Mammary epithelial cell (primary cell): ENCODE measurements at regions of chr19 and their contacts with region 1.

Region 1: GRCh38 chr19:3687774-3688706 is 12.2 kb downstream of the PIP5K1C start:
- DNase-seq: peak; percentile 43
- H3K4me3 ChIP-seq: peak overlapping the region in 2 of 3 experiments; percentile 1 to 5
- H3K27ac ChIP-seq: no peak overlapping the region
- H3K4me1 ChIP-seq: peaks cover 10% of the 10 kb centered on the region
- H3K27me3 ChIP-seq: no peaks in the 10 kb centered on the region
- CTCF ChIP-seq: no peak

Region 2: GRCh38 chr19:3653865-3654513 is 34.1 kb before region 1 on chr19:
- CTCF ChIA-PET with region 1: no interaction called
- dilution Hi-C with region 1: loop called (anchors 5 kb)
- in situ Hi-C with region 1: no loop called
- intact Hi-C with region 1: no loop called
- DNase-seq: no peak
- H3K4me3 ChIP-seq: no peak overlapping the region
- H3K27ac ChIP-seq: no peak overlapping the region
- H3K4me1 ChIP-seq: peaks cover 13% of the 10 kb centered on the region
- H3K27me3 ChIP-seq: no peaks in the 10 kb centered on the region
- CTCF ChIP-seq: no peak

Region 3: DNA sequence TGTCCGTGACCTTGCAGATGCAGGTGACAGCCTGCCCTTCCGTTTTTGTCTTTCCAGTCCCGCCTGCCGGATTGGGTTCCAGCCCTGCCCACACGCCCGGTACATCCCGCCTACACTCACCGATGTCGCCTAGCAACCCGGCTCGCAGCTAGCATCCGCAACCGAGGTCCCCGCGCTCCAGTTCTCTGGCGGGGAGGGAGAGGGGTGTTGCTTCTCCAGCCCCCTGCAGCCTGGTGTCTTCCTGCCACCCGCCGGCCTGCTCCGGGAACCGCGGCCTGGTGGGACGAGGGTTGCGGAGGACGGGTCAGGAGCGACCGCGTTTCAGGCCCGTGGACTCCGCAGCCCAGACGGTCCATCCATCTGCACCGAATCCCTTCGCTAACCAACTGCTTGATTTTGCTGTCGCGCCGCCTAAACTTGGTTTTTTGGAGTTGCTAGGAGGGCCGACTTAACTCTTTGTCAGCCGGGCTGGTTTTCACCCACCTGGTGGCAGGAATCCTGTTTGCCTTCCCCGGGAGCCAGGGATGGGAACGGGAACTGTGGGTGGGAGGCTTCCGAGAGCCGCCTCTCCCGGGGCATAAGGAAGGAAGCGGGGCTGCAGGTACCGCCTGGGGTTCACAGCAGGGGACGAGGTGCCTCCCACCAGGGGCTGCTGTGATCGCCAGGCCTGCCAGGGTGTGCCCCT is 113.5 kb after region 1 on chr19:
- CTCF ChIA-PET with region 1: no interaction called
- dilution Hi-C with region 1: no loop called
- in situ Hi-C with region 1: no loop called
- intact Hi-C with region 1: no loop called
- DNase-seq: peak; percentile 24
- H3K4me3 ChIP-seq: no peak overlapping the region
- H3K27ac ChIP-seq: no peak overlapping the region
- H3K4me1 ChIP-seq: peaks cover 6% of the 10 kb centered on the region
- H3K27me3 ChIP-seq: peaks cover 14% of the 10 kb centered on the region
- CTCF ChIP-seq: peak in 1 of 2 donors; percentile 31